HepG2 (cell line): ENCODE measurements at regions of chr12 and their contacts with region 1.

Region 1: GRCh38 chr12:132470978-132471857 is 18.7 kb upstream of the FBRSL1 start:
- DNase-seq: peak; percentile 99
- ATAC-seq: peak; percentile 95
- H3K4me3 ChIP-seq: no peak overlapping the region
- H3K27ac ChIP-seq: peak overlapping the region; percentile 40
- H3K4me1 ChIP-seq: peaks cover 33% of the 10 kb centered on the region
- H3K27me3 ChIP-seq: peaks cover 5 to 25% of the 10 kb centered on the region in 2 experiments; a peak in 3 of 5 replicates
- CTCF ChIP-seq: no peak; the same call in 1 of the 2 replicates
- EP300 ChIP-seq: peak in 1 of 2 experiments; percentile 74; a peak in 2 of 4 replicates
- POLR2A ChIP-seq: no peak
- RAD21 ChIP-seq: no peak

Region 2: DNA sequence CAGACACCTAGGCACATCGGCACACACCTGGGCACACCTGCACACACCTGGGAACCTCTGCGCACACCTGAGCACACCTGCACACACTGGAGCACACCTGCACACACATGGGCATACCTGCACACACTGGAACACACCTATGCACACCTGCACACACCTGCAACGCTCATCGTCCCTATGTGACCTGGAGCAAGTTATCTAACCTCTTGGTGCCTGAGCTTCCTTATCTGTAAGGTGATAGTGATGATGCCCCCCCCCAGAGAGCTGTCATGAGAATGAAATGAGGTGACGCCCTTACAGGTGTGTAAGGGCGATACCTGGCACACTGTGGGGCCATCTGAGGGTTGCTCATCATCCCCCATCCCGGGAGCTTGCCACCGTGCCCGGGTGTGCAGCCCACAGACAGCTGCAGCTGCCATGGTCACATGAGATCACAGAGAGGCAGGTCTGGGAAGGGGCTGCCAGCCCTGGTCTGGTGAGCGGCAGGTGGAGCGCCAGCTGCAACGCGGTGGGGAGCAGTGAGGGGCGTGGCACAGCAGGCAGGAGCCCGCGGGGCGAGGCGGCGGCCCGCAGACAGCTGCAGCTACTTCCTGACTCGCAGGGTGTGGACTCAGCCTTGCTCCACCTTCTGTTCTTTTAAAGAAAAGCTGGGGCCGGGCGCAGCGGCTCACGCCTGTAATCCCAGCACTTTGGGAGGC is 41.1 kb before region 1 on chr12:
- CTCF ChIA-PET with region 1: no interaction called
- POLR2A ChIA-PET with region 1: no interaction called
- in situ Hi-C with region 1: no loop called
- intact Hi-C with region 1: loop called (anchors 10 kb)
- DNase-seq: no peak
- ATAC-seq: peak; percentile 17
- H3K4me3 ChIP-seq: peak overlapping the region in 1 of 3 experiments; percentile 65; a peak in 2 of 6 replicates
- H3K27ac ChIP-seq: no peak overlapping the region
- H3K4me1 ChIP-seq: peaks cover 77% of the 10 kb centered on the region
- H3K27me3 ChIP-seq: peaks cover 2 to 45% of the 10 kb centered on the region in 2 experiments
- CTCF ChIP-seq: peak; percentile 32; the same call in 1 of the 2 replicates
- EP300 ChIP-seq: no peak
- POLR2A ChIP-seq: no peak
- RAD21 ChIP-seq: no peak

Region 3: GRCh38 chr12:132489602-132490239 is 18.5 kb after region 1 on chr12 and contains the start of gene FBRSL1:
- CTCF ChIA-PET with region 1: no interaction called
- POLR2A ChIA-PET with region 1: no interaction called
- in situ Hi-C with region 1: no loop called
- intact Hi-C with region 1: no loop called
- DNase-seq: peak; percentile 72
- ATAC-seq: peak; percentile 22
- H3K4me3 ChIP-seq: peak within 1 kb of the TSS; percentile 65 to 88 (median 83)
- H3K27ac ChIP-seq: peak within 1 kb of the TSS; percentile 58
- H3K4me1 ChIP-seq: peaks cover 51% of the 10 kb centered on the region
- H3K27me3 ChIP-seq: peaks cover 16 to 46% of the 10 kb centered on the region in 2 experiments
- CTCF ChIP-seq: peak; percentile 43
- EP300 ChIP-seq: no peak
- POLR2A ChIP-seq: no peak
- RAD21 ChIP-seq: peak; percentile 22; the same call in 1 of the 2 replicates
- total RNA-seq, gene FBRSL1: 3.7 and 7.9 TPM in 2 replicates